PC-9 (cell line): ENCODE measurements at regions of chr4 and their contacts with region 1.

Region 1: GRCh38 chr4:175215657-175216056 is 297.5 kb downstream of the ADAM29 start:
- DNase-seq: no peak
- H3K4me3 ChIP-seq: no peak overlapping the region
- H3K27ac ChIP-seq: no peak overlapping the region
- H3K4me1 ChIP-seq: no peaks in the 10 kb centered on the region
- H3K27me3 ChIP-seq: no peaks in the 10 kb centered on the region
- CTCF ChIP-seq: no peak

Region 2: GRCh38 chr4:175109933-175110332 is 105.7 kb before region 1 on chr4:
- CTCF ChIA-PET with region 1: no interaction called
- POLR2A ChIA-PET with region 1: no interaction called
- intact Hi-C with region 1: no loop called
- DNase-seq: no peak
- H3K4me3 ChIP-seq: no peak overlapping the region
- H3K27ac ChIP-seq: no peak overlapping the region
- H3K4me1 ChIP-seq: no peaks in the 10 kb centered on the region
- H3K27me3 ChIP-seq: no peaks in the 10 kb centered on the region
- CTCF ChIP-seq: no peak

Region 3: DNA sequence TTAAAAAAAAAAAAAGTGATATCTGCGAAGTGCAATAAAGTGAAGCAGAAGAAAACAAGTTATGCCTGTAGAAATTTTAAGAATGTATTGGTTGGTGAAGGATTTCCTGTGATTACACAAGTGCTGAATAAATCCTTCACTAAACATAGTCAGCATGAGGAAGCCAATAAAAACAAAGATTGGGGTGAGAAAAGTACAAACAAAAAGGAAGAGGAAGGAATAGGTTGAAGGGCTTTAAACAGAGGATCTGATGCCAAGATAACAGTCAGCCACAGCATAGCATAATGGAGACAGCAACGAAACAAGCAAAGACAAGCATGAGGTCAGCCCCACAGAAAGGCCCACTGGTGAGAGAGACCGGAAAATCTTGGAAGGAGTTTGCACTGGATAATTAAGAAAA is 74.7 kb after region 1 on chr4:
- CTCF ChIA-PET with region 1: no interaction called
- POLR2A ChIA-PET with region 1: no interaction called
- intact Hi-C with region 1: loop called (anchors 2 kb)
- DNase-seq: no peak
- H3K4me3 ChIP-seq: no peak overlapping the region
- H3K27ac ChIP-seq: no peak overlapping the region
- H3K4me1 ChIP-seq: no peaks in the 10 kb centered on the region
- H3K27me3 ChIP-seq: no peaks in the 10 kb centered on the region
- CTCF ChIP-seq: no peak